ENCODE measurements at regions of chr14 and their contacts with region 1.

Region 1: DNA sequence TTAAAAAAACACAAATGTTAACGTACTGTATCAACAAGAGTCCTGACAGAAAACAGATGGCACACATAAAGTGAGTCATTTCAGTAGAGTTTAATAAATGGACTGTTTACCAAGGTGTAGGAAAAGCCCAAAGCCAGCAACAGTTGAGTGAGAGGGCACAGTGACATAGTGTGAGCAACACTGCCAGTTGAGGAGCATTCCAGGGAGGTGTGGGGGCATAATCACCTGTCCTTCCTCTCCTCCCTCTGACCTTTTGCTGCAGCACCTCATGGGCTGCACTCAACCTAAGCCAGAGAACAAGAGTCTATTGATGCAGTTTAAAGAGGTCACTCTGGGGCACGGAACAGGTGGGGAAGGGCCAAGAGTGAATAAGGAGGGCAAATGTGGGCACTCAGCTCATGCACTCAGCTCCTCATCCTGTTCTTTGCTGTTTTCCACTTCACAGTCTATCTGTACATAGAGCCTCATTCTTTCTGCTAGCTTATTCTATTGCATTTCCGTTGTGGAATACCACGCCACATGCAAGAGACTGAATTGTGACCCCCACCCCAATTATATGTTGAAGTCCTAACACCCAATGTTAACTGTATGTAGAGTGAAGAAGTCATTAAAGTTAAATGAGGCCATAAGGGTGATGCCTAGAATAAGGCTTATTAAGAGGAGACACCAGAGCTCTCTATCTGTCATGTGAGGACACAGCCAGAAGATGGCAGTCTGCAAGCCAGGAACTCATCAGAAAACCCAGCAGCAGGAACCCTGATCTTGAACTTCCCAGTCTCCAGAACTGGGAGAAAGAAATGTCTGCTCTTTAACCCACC is 29.4 kb downstream of the DHRS2 start:
- DNase-seq: peak; percentile 67
- ATAC-seq: peak; percentile 85
- H3K4me3 Mint-ChIP-seq: no peak overlapping the region
- H3K27ac Mint-ChIP-seq: no peak overlapping the region
- H3K4me1 Mint-ChIP-seq: peaks cover 5% of the 10 kb centered on the region
- H3K27me3 Mint-ChIP-seq: no peaks in the 10 kb centered on the region; the same call in 1 of the 2 replicates
- CTCF ChIP-seq: 0 out of 2 replicates have a peak, but pooled peaks have one; percentile 32

Region 2: GRCh38 chr14:23694085-23694975 is 28.7 kb after region 1 on chr14:
- CTCF ChIA-PET with region 1: interaction called, 12 read pairs
- POLR2A ChIA-PET with region 1: interaction called, 3 read pairs
- DNase-seq: peak; percentile 37
- ATAC-seq: peak; percentile 68
- H3K4me3 Mint-ChIP-seq: no peak overlapping the region
- H3K27ac Mint-ChIP-seq: no peak overlapping the region
- H3K4me1 Mint-ChIP-seq: 0 out of 2 replicates have a peak, but pooled peaks cover 3% of the 10 kb centered on the region
- H3K27me3 Mint-ChIP-seq: peaks cover 6% of the 10 kb centered on the region
- CTCF ChIP-seq: no peak